ENCODE measurements at regions of chr22 and their contacts with region 1.

Region 1: DNA sequence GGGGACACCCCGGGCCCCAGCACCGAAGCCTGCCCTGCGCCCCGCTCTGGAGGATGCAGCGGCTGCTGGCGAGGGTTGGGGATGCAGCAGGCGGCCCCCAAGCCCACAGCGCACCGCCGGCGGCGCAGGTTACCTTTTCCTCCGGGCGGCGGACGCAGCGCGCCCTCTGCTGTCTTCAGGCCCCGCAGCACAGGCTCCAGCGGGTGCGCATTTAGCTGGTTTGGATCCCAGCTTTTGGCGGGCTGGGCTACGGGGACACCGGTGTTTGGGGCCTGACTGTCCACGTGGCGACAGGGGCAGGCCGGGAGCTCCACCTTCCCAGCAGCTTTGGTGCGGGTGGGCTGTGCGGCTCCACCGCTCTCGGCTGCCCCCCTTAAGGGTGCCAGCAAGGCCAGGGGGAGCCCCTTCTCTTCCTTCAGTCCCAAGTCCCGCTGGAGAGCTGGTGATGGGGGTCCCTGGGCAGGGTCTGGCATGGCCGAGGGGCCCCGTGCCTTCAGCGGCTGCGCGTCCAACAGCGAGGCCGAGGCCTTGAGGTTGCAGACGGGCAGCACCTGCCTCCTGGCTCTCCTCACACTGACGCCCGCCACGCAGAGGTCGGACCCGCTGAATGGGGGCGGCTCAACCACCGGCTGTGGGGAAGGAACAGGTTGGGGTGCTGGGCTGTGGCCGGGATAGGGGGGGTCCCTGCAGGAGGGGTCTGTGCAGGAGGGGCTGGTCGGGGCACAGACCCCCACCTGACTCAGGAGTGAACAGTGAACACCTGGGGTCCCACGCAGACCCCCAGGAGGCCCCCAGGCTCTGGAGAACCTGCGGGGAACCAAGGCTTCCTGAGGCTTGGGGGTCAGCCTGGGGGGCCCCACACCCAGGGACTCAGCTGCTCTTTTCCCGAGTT is 18.0 kb upstream of the IL17REL start:
- DNase-seq: peak; percentile 86
- ATAC-seq: peak; percentile 96
- H3K4me3 Mint-ChIP-seq: no peak overlapping the region
- H3K27ac Mint-ChIP-seq: no peak overlapping the region
- H3K4me1 Mint-ChIP-seq: peaks cover 12% of the 10 kb centered on the region
- H3K27me3 Mint-ChIP-seq: peaks cover 5% of the 10 kb centered on the region

Region 2: DNA sequence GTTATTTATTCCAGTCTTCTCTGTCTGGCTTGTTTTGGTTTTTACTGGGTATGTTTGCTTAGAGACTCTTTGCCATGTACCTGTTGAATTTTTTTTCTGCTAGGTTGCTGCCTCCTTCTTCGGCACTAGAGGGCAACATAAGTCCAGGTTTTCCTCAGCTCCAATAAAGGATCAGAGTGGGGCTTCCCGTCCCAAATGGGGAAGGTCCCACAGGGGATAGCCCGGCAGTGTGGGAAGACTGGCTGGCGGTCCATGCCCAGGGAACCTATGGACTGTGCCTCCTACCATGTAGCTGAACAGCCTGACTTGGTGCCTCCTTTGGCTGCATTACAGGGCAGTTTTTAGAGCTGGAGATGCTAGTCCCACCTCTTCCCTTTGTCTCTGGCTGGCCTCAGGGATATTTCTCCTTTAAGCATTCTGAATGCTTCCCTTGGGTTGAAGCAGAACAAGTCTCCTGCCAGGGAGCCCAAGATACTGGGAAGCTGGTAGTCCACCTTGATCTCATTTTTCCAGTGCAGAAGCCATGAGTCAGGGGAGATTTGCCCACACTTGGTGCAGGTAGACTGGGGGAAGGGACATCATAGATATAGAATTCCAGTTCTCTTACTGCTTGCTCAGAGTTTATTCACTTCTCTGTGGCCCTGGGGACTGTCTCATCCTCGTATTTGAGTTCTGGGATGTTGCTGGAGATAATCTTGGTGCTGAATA is 263.0 kb before region 1 on chr22:
- CTCF ChIA-PET with region 1: interaction called, 32 read pairs
- DNase-seq: no peak
- ATAC-seq: peak; percentile 54
- H3K4me3 Mint-ChIP-seq: no peak overlapping the region
- H3K27ac Mint-ChIP-seq: no peak overlapping the region
- H3K4me1 Mint-ChIP-seq: peaks cover 12% of the 10 kb centered on the region
- H3K27me3 Mint-ChIP-seq: no peaks in the 10 kb centered on the region

Region 3: DNA sequence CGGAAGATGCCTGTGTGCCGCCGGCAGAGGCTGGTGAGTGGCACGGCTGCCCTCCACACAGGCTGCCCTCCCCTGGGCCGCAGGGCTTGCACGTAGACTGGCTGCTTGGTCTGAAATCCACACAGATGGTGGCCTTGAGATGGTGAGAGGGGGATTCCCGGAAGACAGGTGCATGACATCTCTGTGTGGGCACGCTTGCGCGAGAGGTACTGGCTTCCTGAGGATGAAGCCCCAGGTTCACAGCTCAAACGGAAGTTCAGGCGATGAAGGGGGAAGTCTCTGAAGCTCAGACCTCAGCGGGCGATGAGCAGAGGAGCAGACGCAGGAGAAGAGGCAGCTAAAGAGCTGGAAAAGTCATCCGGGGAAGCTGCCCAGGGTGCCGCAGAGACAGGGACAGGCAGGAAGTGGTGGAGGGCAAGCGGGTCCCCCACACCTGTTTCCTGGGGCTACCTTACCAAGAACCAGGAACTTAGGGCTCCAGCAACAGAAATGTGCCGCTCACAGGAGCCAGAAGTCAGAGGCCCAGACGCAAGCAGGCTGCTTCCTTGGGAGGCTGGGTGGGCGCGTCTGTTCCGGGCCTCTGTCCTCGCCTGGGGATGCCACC is 104.9 kb before region 1 on chr22:
- CTCF ChIA-PET with region 1: interaction called, 48 read pairs
- DNase-seq: peak; percentile 75
- ATAC-seq: peak; percentile 63
- H3K4me3 Mint-ChIP-seq: peak overlapping the region; percentile 66
- H3K27ac Mint-ChIP-seq: peak overlapping the region; percentile 90
- H3K4me1 Mint-ChIP-seq: peaks cover 26% of the 10 kb centered on the region
- H3K27me3 Mint-ChIP-seq: no peaks in the 10 kb centered on the region

Region 4: GRCh38 chr22:49930739-49931412 is 99.7 kb before region 1 on chr22:
- CTCF ChIA-PET with region 1: interaction called, 48 read pairs
- DNase-seq: peak; percentile 69
- ATAC-seq: no peak
- H3K4me3 Mint-ChIP-seq: no peak overlapping the region
- H3K27ac Mint-ChIP-seq: no peak overlapping the region
- H3K4me1 Mint-ChIP-seq: peaks cover 41% of the 10 kb centered on the region
- H3K27me3 Mint-ChIP-seq: no peaks in the 10 kb centered on the region

Region 5: GRCh38 chr22:49936018-49936952 is 94.3 kb before region 1 on chr22:
- CTCF ChIA-PET with region 1: interaction called, 48 read pairs
- DNase-seq: peak; percentile 95
- ATAC-seq: peak; percentile 88
- H3K4me3 Mint-ChIP-seq: peak overlapping the region; percentile 36
- H3K27ac Mint-ChIP-seq: peak overlapping the region; percentile 84
- H3K4me1 Mint-ChIP-seq: peaks cover 25% of the 10 kb centered on the region
- H3K27me3 Mint-ChIP-seq: no peaks in the 10 kb centered on the region

Region 6: DNA sequence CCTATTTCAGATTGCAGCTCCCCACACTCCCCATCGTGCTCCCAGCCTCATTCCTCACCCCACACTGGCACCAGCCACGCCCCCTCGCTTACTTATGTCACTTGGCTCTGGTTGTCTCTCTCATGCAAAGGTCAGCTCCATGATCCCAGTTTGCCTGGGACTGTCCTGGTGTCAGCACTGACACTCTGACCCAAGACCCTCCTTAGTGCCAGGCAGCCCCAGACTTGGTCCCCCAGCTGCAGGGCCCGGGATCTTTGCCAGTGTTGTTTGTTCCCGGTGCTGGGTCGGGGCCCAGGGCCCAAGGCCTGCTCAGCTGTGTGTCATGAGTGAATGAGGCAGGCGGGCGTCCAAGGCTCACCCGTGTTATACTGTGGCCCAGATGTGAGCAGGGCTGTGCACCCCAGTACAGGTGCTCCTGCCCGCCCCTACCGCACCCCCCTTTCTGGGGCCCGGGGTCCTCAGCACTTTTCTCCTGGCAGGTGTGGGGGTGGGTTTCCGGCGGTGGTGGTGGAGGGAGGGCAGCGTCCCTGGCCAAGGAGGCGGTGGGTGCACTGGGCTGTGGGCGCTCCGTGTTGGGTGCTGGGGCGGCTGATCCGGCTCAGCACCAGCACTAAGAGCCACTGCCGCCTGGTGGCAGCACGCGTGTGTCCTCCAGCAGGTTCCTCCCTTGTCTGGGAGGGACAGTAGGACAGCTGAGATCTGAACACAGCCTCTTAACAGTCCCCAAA is 37.5 kb before region 1 on chr22:
- CTCF ChIA-PET with region 1: interaction called, 38 read pairs
- DNase-seq: peak; percentile 80
- ATAC-seq: peak; percentile 95
- H3K4me3 Mint-ChIP-seq: no peak overlapping the region
- H3K27ac Mint-ChIP-seq: no peak overlapping the region
- H3K4me1 Mint-ChIP-seq: peaks cover 5% of the 10 kb centered on the region
- H3K27me3 Mint-ChIP-seq: peaks cover 12% of the 10 kb centered on the region

Region 7: DNA sequence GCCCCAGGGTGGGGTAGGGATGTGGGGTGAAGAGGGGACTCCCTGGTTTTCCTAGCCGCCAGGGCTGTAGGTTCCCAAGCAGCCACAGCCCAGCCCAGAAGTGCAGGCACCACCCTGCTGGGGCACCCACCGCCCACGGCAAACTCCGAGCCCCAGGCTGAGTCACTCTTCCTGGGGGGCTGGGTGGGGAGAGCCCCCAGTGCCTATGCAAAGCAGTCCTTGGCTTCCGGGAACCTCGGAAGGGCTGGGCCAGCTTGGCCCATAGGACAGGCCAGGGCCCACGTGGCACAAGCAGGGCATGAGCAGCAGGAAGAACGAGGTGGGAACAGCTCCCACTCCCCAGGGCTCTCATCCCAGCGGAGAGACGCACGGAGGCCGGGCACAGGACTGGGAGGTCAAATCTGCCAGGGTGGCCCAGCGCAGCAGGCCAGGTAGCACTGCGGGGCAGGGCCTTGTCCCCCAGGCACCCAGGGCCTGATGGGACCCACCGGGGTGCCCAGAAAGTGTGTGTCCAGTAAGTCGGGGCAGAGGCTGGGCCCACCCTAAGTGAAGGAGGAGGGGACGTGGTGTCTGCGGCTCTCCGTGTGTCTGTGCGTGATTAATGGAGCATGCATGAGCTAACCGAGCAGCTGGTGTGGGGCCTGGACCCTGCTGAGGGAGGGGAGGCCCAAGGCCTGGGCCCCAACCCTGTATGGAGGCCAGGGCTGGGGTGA is 13.4 kb before region 1 on chr22:
- CTCF ChIA-PET with region 1: interaction called, 14 read pairs
- DNase-seq: peak; percentile 73
- ATAC-seq: peak; percentile 57
- H3K4me3 Mint-ChIP-seq: peak overlapping the region; percentile 44
- H3K27ac Mint-ChIP-seq: peak overlapping the region; percentile 35
- H3K4me1 Mint-ChIP-seq: peaks cover 35% of the 10 kb centered on the region
- H3K27me3 Mint-ChIP-seq: peaks cover 9% of the 10 kb centered on the region

Region 8: DNA sequence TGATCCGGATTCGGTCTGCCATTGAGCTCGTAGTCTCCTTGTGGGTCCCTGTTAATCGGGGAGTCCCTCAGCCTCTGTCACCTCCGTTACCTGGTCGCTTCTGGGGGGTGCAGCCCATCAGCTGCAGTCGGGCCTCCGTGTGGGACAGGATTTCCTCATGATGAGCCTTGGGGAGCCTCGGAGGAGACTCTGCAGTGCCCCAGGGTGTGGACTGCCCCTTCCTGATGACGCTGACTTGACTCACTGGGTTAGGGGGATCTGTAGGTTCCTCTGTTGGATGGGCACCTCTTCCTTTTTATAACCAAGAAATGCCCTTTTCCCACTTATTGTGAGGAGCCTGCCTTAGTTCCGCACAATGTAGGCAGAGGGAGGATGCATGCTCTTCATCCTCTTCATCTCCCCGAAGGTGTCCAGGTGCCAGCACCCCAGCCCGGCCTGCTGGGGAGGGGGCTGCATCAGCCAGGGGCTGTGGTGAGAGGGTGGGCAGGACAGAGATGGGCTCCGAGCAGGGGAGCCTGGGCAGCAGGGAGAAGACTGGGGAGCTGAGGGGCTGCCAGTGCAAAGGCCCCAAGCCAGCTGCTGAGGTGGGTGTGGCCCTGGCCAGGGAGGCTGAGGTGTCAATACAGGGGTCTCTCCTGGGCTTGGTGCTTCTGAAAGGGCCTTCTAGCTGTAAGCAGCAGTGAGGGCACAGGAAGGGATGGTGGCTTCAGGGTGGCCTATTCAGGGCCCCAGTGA is 41.1 kb after region 1 on chr22:
- CTCF ChIA-PET with region 1: no interaction called
- DNase-seq: no peak
- ATAC-seq: no peak
- H3K4me3 Mint-ChIP-seq: no peak overlapping the region
- H3K27ac Mint-ChIP-seq: no peak overlapping the region
- H3K4me1 Mint-ChIP-seq: no peaks in the 10 kb centered on the region
- H3K27me3 Mint-ChIP-seq: no peaks in the 10 kb centered on the region